ENCODE measurements at regions of chr9 and their contacts with region 1.

Region 1: DNA sequence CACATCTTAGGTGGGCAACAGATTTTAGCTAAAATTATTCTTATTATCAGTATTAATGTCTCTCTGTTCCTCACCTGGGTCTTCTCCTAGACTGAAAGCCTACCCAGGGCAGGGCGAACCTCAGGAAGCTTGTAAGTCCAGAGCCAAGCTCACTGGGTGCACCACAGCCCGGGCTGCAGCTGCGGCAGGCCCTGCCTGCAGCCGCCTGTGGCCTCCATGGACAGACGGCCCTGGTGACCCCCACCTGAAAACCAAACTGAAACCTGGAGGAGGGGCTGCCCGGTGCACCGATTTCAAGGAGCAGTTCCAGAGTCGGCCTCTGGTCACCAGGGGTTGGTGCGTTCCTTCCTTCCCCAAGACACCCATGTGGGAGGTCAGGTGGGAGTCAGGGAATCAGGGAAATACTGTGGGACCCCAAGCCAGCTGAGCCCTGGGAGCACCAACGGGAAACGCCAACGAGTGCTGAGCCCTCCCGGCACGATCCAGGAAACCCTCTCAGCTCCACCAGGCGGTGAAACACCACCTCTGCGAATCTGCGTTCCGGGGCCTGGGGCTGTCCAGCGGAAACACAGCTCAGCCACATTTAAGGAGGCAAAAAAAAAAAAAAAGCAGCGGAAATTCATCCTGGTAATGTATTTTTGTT is 68.6 kb upstream of the PPP1R26 start:
- DNase-seq: no peak
- H3K4me3 ChIP-seq: no peak overlapping the region
- H3K27ac ChIP-seq: no peak overlapping the region
- H3K4me1 ChIP-seq: no peaks in the 10 kb centered on the region
- H3K27me3 ChIP-seq: no peaks in the 10 kb centered on the region
- CTCF ChIP-seq: no peak

Region 2: DNA sequence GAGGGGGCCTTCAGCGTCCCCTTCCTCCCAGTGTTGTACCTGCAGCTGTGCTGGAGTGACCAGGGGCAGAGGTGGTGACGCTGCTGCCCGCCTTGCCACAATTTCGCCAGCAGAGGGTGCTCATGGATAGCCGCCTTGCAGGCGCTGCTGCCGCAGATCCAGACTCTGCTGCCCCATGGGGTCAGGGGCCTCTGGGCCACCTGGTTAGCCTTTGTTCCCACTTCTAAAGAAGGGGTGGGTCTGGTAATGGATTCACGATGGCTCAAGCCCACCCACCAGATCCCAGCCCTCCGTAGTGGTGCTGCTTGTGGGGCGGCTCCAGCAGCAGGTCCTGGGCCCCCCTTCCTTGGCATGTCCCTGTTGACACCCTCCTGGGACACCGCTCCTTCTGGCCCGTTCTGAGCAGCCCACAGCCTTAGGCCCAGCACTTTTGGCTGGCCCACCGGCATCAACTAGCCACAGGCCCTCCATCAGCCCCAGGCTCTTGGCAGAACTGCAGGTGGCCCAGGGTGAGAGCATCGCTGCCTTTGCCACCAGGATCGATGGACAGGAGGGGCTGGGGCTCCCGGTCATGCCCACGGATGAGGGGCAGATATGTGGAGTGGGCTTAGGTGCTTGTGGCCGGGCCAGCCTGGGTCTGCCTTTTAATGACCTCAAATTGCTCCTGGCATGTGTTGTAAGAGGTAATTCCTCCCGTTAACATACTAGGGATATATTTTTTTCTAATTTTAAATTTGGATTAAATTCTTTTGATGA is 712.2 kb before region 1 on chr9:
- CTCF ChIA-PET with region 1: no interaction called
- POLR2A ChIA-PET with region 1: no interaction called
- intact Hi-C with region 1: loop called (anchors 10 kb)
- DNase-seq: peak; percentile 50
- H3K4me3 ChIP-seq: no peak overlapping the region
- H3K27ac ChIP-seq: peak overlapping the region; percentile 25
- H3K4me1 ChIP-seq: no peaks in the 10 kb centered on the region
- H3K27me3 ChIP-seq: no peaks in the 10 kb centered on the region
- CTCF ChIP-seq: peak; percentile 91

Region 3: DNA sequence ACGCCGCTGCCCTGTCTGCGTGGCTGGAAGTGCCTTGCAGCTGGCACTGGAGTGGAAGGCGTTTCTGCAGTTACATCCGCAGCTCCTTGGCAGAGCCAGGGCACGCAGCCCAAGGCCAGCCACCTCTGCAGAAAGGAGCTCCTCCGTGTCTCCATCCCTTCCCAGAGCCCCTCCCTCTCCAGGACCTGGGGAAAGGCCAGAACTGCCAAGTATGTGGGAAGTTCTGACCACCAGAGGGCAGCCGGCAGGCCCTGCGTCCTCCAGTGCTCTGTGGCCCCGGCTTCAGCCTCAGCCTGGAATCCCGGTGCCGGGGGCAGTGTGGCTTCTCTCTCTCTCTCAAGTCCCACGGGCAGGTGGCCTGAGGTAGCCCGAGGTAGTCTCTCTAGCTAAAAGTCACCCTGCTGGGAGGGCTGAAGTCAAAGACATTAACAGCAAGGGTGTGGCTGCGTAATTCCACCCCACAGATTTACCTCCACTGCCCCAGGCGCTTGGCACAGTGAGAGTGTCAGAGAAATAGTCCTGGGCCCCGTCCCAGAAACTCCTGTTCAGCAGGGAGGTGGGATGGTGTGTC is 632.0 kb before region 1 on chr9:
- CTCF ChIA-PET with region 1: interaction called, 3 read pairs
- POLR2A ChIA-PET with region 1: no interaction called
- intact Hi-C with region 1: loop called (anchors 10 kb)
- DNase-seq: peak; percentile 39
- H3K4me3 ChIP-seq: no peak overlapping the region
- H3K27ac ChIP-seq: no peak overlapping the region
- H3K4me1 ChIP-seq: no peaks in the 10 kb centered on the region
- H3K27me3 ChIP-seq: no peaks in the 10 kb centered on the region
- CTCF ChIP-seq: peak; percentile 57

Region 4: DNA sequence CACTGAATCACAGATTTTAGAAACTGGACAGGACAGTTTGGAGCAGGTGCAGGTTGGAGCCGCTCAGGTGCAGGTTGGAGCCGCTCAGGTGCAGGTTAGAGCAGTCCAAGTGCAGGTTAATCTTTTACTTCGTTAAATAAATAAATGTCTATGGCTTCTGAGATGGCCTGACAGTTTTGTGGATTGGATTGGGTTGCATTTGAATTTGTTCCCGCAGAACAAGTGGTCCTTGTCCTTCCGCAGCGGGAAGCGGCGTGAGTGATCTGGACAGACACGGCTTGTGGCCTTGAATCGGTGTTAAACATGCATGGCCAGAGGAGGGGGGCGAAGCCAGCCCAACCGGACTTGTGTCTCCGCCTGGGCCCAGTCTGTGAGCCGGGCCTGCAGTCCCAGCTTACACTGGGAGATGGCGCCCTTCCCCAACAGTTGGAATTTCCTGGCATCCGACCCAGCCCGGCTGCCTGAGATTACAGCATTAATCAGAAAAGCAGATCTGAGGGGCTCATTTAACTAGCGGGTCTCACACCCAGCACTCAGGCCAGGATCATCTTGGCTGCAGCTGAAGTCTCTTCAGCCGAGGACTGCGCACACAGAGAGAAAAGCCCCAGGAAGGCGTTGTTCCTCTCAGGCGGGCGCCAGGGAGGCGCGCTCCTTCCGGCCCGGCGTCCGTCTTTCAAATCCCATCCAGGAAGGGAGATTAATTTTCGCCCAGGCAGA is 325.0 kb before region 1 on chr9:
- CTCF ChIA-PET with region 1: interaction called, 3 read pairs
- POLR2A ChIA-PET with region 1: no interaction called
- intact Hi-C with region 1: loop called (anchors 1 kb)
- DNase-seq: peak; percentile 92
- H3K4me3 ChIP-seq: peak overlapping the region; percentile 95
- H3K27ac ChIP-seq: peak overlapping the region; percentile 70
- H3K4me1 ChIP-seq: peaks cover 57% of the 10 kb centered on the region
- H3K27me3 ChIP-seq: no peaks in the 10 kb centered on the region
- CTCF ChIP-seq: peak; percentile 99

Region 5: DNA sequence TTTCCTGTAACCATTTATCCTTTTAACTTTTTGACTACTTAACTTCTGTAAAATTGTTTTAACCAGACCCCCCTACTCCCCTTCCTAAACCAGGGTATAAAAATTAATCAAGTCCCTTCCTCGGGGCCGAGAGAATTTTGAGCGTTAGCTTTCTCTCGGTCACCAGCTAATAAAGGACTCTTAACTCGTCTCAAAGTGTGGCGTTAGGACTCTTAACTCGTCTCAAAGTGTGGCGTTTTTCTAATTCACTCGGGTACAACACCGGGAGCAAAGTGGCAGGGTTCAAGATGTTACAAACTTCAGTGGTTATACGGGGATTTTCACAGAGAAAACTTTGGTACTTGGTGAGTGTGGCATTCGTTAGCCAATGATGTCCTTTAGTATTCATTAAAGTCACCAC is 29.0 kb after region 1 on chr9:
- CTCF ChIA-PET with region 1: no interaction called
- POLR2A ChIA-PET with region 1: no interaction called
- intact Hi-C with region 1: no loop called
- DNase-seq: no peak
- H3K4me3 ChIP-seq: no peak overlapping the region
- H3K27ac ChIP-seq: no peak overlapping the region
- H3K4me1 ChIP-seq: no peaks in the 10 kb centered on the region
- H3K27me3 ChIP-seq: no peaks in the 10 kb centered on the region
- CTCF ChIP-seq: no peak

Measured in A673 (cell line).